Cardiac septum (tissue), 1 donor: ENCODE measurements at regions of chr5 and their contacts with region 1.

Region 1: GRCh38 chr5:159106569-159107282 is 7.0 kb upstream of the EBF1 start:
- DNase-seq: peak; percentile 89

Region 2: GRCh38 chr5:158013939-158014338 is 1092.8 kb before region 1 on chr5:
- intact Hi-C with region 1: loop called (anchors 10 kb)
- DNase-seq: no peak

Region 3: DNA sequence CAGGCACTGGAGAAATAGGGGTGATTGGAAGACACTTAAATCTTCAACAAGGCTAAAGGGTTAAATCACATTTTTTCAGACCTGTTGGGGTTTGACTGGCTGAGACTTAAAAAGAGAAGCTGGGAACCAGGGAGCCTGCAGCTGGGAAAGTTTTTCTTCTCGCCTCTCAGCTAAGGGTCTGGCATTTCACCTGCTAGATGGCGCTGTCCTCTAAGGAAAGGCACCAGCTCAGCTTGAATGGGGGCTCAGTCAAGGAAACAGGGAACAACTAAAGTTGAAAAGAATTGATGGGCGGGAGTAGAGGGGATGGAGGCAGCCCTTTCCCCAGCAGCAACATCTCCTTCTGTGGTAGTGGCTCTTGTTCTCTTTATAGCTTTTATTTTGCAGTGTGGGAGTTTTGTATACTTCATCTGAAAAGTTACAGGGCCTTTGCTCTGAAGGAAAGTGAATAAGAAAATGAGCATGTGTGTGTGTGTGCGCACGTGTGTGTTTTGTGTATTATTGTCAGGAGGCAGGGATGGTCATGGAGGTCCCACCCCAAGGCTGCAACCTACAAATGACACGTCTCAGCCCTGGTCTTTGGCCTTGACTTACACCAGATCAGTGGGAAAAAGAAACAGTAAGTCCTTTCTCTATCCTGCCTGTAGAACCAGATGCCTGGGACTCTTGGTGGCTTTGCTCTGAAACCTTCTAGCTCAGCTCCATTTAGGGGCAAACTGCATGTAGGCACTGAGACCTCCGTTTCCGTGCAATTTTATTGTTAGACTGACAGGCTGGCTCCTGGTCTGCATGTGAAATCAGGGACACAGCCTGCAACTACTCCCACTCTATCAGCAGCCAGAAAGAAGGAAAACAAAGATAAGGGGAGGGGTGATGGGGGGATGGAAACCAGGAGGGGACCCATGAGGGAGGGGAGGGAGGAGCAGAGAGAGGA is 931.5 kb before region 1 on chr5:
- intact Hi-C with region 1: loop called (anchors 2 kb)
- DNase-seq: peak; percentile 80

Region 4: DNA sequence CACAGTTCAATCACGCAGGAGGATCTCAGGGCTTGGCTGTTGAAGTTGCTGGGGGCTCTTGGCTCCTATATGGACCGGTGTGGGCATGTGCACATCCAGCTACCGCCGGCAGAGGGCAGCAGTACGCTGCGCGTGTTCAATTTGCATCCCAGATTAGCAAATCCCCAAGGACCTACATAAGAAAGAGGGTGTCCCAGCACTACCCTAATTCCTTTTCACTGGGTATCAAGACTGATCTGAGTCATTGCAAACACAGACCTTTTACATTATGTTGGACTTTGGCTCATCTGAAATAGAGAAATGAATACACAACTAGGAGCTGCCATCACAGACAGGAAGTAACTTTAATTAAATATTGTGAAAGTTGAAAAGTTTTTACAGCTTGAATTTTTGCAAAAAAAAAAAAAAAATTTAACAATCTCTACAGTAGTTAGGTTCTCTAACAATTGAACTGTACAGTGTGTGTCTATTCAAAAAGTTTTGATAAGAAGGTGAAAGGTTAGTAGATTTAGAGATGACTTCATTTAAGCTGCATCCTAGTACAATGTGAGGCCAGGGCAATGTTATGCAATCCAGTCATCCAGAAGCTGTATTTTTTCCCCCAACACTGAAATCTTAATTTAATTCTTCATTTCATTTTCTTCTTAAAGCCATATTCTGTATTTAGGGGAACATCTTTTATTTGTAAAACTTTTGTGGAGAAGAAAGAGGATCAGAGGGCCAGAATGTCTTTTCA is 411.0 kb before region 1 on chr5:
- intact Hi-C with region 1: loop called (anchors 2 kb)
- DNase-seq: peak; percentile 89

Region 5: DNA sequence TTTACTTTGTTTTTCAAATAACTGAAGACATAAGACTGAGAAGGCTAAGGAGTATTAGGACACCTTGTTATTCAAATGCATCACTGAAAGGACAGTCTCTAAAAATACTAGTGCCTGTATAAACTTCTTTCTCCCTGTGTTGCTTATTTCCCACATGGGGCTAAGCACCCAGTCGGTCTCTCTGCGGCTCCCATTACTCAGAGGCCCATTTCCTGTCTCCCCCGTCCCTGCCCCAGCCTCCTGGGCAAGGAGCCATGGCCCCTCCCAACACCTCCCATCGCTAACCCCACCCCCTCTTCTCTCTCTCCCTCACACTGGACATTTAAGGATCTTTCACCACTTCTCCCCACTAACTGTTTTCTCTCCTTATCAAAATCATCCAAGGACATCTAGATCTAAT is 88.9 kb before region 1 on chr5:
- intact Hi-C with region 1: no loop called
- DNase-seq: peak; percentile 78